ENCODE measurements at regions of chr1 and their contacts with region 1.

Region 1: DNA sequence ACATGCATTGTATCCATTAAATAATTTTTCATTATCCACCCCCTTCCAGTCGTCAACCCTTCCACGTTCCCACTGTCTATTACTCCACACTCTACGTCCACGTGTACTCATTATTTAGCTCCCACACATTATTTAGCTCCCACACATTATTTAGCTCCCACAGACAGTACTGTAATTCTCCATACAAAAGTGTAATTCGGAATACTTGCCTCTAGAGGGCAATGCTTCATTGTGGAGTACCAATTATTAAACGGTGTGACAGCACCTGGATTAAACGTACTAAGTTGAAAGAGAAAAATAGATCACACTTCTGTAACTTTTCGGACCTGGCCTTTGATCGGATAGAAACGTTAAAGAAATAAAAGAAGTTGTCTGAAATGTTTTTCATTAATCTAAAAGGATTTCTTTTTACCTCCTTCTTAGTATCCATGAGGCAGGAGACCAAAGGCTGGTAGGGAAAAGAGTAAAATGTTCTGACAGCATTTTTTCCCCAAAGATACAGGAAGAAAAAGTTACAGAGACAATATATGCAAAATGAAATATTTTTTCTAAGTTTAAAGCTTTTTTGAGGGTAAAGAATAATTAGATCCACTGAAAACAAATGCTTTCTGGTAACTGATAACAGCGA is 99.2 kb downstream of the LHX8 start:
- DNase-seq: peak; percentile 8
- ATAC-seq: peak; percentile 87
- H3K4me3 ChIP-seq: no peak overlapping the region
- H3K27ac ChIP-seq: no peak overlapping the region
- H3K4me1 ChIP-seq: no peaks in the 10 kb centered on the region
- H3K27me3 ChIP-seq: no peaks in the 10 kb centered on the region
- CTCF ChIP-seq: peak; percentile 73; the same call in 1 of the 2 replicates

Region 2: DNA sequence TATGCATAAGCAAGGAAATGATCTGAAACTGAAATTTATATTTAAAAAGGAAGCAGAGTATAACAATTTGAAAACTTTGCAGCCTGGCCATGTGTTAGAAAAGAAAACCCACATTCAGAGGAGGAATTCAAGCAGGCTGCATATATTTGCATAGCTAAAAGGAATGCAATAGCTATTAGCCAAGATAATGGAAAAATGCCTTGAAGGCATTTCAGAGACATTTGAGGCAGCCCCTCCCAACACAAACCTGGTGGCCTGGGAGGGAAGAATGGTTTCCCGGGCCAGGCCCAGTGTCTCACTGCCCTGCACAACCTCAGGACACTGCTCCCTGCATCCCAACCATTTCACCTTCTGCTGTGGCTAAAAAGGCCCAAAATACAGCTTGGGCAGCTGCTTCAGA is 363.7 kb before region 1 on chr1:
- CTCF ChIA-PET with region 1: no interaction called
- POLR2A ChIA-PET with region 1: no interaction called
- in situ Hi-C with region 1: no loop called
- intact Hi-C with region 1: no loop called
- DNase-seq: no peak
- ATAC-seq: no peak
- H3K4me3 ChIP-seq: no peak overlapping the region
- H3K27ac ChIP-seq: no peak overlapping the region
- H3K4me1 ChIP-seq: no peaks in the 10 kb centered on the region
- H3K27me3 ChIP-seq: no peaks in the 10 kb centered on the region
- CTCF ChIP-seq: no peak

Region 3: GRCh38 chr1:75361260-75361659 is 127.8 kb after region 1 on chr1:
- CTCF ChIA-PET with region 1: no interaction called
- POLR2A ChIA-PET with region 1: no interaction called
- in situ Hi-C with region 1: no loop called
- intact Hi-C with region 1: no loop called
- DNase-seq: no peak
- ATAC-seq: no peak
- H3K4me3 ChIP-seq: no peak overlapping the region
- H3K27ac ChIP-seq: no peak overlapping the region
- H3K4me1 ChIP-seq: no peaks in the 10 kb centered on the region
- H3K27me3 ChIP-seq: no peaks in the 10 kb centered on the region
- CTCF ChIP-seq: no peak

Region 4: DNA sequence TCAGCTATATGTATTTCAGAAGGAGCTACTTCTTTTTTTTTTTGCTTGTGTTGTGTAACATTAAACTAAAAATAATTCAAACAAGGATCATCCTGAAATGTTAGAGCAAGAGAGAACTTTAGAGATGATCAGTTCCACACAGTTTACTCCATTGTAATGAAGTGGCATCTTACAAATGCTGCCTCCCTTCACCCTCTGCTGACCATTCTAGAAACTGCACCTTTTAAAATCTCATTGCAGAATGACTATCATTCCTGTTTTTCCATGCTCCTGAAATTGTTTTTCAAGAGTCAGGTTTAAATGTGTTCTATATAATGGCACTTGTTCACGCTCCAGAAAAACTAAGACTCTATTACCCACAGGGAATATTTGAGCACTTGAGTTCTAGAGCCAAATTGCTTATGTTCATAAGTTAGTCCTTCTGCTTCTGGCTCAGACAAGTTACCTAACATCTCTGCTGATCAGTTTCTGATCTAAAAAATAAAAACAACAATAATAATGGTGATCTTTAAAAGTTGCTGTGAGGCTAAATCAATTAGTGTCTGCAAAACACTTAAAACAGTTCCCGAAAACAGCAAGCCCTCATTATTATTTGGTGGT is 399.0 kb after region 1 on chr1:
- CTCF ChIA-PET with region 1: no interaction called
- POLR2A ChIA-PET with region 1: no interaction called
- in situ Hi-C with region 1: no loop called
- intact Hi-C with region 1: loop called (anchors 10 kb)
- DNase-seq: no peak
- ATAC-seq: peak; percentile 63; the same call in 1 of the 2 replicates
- H3K4me3 ChIP-seq: no peak overlapping the region
- H3K27ac ChIP-seq: no peak overlapping the region
- H3K4me1 ChIP-seq: no peaks in the 10 kb centered on the region
- H3K27me3 ChIP-seq: no peaks in the 10 kb centered on the region
- CTCF ChIP-seq: peak; percentile 76; the same call in 1 of the 2 replicates

Region 5: GRCh38 chr1:75811211-75811981 is 578.0 kb after region 1 on chr1:
- CTCF ChIA-PET with region 1: interaction called, 15 read pairs
- POLR2A ChIA-PET with region 1: no interaction called
- in situ Hi-C with region 1: no loop called
- intact Hi-C with region 1: no loop called
- DNase-seq: no peak
- ATAC-seq: no peak
- H3K4me3 ChIP-seq: no peak overlapping the region
- H3K27ac ChIP-seq: no peak overlapping the region
- H3K4me1 ChIP-seq: no peaks in the 10 kb centered on the region
- H3K27me3 ChIP-seq: no peaks in the 10 kb centered on the region
- CTCF ChIP-seq: no peak

Measured in Panc1 (cell line).